B cell (primary cell): ENCODE measurements at regions of chr17 and their contacts with region 1.

Region 1: GRCh38 chr17:45247429-45248131 is 14.3 kb downstream of the SPATA32 start:
- DNase-seq: peak; percentile 97
- ATAC-seq: peak; percentile 88
- H3K4me3 ChIP-seq: peak overlapping the region; percentile 2 to 81 (median 78)
- H3K4me3 Mint-ChIP-seq: peak overlapping the region; percentile 92
- H3K27ac ChIP-seq: peak overlapping the region; percentile 82 to 92
- H3K27ac Mint-ChIP-seq: peak overlapping the region; percentile 96
- H3K4me1 ChIP-seq: peaks cover 20 to 22% of the 10 kb centered on the region in 2 donors
- H3K4me1 Mint-ChIP-seq: peaks cover 34% of the 10 kb centered on the region
- H3K27me3 ChIP-seq: no peaks in the 10 kb centered on the region
- H3K27me3 Mint-ChIP-seq: no peaks in the 10 kb centered on the region
- CTCF ChIP-seq: no peak

Region 2: DNA sequence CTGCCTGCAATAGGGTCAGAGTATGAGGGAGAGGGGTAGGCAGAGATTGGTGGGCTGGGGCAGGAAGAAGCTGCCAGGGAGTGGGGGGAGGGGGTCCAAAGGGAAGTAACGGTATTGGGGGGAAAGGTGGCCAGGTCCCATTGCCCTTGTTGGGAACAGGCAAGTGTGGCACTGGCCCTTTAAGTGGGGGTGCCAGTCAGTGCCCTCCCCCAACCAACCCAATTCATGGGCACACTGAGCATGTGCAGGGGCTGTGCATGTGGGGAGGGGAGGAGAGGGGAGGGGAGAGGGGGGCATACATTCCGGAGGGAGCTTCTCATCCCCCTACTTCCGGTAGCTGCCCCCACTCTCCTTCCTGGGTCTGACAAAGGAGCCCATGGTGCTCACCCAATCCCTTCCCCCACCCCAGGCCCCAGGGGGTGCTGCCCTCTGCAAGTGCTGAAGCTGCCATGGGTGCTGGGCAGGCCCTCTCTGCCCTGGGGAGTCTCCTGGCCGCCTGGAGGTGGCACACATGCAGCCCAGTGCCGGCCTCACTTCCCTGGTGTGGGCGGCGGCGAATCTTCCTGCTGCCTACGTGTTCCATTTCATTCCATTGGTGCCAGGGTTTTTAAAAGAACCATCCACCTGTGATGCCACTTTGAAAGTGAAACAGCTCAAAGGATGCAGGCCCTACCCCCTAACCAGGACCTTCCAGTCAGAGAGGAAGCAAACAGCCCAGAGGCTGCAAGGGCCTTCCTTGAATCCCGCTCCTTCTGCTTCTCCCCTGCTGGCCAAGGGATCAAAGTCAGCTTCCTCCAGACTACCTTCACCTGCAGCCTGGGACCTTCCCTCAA is 74.9 kb before region 1 on chr17:
- CTCF ChIA-PET with region 1: no interaction called
- POLR2A ChIA-PET with region 1: interaction called, 3 read pairs
- intact Hi-C with region 1: loop called (anchors 2 kb)
- DNase-seq: peak; percentile 59
- ATAC-seq: peak; percentile 85
- H3K4me3 ChIP-seq: peak overlapping the region in 4 of 5 experiments; percentile 31 to 51 (median 49)
- H3K4me3 Mint-ChIP-seq: peak overlapping the region; percentile 86
- H3K27ac ChIP-seq: peak overlapping the region; percentile 40 to 63
- H3K27ac Mint-ChIP-seq: peak overlapping the region; percentile 97
- H3K4me1 ChIP-seq: peaks cover 11 to 16% of the 10 kb centered on the region in 2 donors
- H3K4me1 Mint-ChIP-seq: peaks cover 12% of the 10 kb centered on the region
- H3K27me3 ChIP-seq: no peaks in the 10 kb centered on the region
- H3K27me3 Mint-ChIP-seq: no peaks in the 10 kb centered on the region
- CTCF ChIP-seq: no peak

Region 3: DNA sequence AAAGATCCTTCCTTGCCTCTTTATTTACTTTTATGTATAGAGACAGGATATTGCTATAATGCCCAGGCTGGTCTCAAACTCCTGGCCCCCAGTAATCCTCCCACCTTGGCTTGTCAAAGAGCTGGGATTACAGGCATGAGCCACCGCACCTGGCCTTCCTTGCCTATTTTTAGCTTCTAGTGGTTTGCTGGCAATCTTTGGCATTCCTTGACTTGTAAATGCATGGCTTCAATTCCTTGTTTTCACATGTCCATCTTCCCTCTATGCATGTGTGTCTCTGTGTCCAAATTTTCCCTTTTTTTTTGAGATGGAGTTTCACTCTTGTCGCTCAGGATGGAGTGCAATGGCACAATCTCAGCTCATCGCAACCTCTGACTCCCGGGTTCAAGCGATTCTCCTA is 63.4 kb before region 1 on chr17:
- CTCF ChIA-PET with region 1: no interaction called
- POLR2A ChIA-PET with region 1: no interaction called
- intact Hi-C with region 1: no loop called
- DNase-seq: no peak
- ATAC-seq: no peak
- H3K4me3 ChIP-seq: no peak overlapping the region
- H3K4me3 Mint-ChIP-seq: no peak overlapping the region
- H3K27ac ChIP-seq: no peak overlapping the region
- H3K27ac Mint-ChIP-seq: no peak overlapping the region
- H3K4me1 ChIP-seq: no peaks in the 10 kb centered on the region
- H3K4me1 Mint-ChIP-seq: no peaks in the 10 kb centered on the region
- H3K27me3 ChIP-seq: peaks cover 0 to 2% (median 0%) of the 10 kb centered on the region in 4 experiments
- H3K27me3 Mint-ChIP-seq: no peaks in the 10 kb centered on the region
- CTCF ChIP-seq: no peak

Region 4: GRCh38 chr17:45228763-45229539 is 18.6 kb before region 1 on chr17:
- CTCF ChIA-PET with region 1: interaction called, 737 read pairs
- POLR2A ChIA-PET with region 1: interaction called, 39 read pairs
- intact Hi-C with region 1: loop called (anchors 1 kb)
- DNase-seq: peak; percentile 94
- ATAC-seq: peak; percentile 52
- H3K4me3 ChIP-seq: peak overlapping the region; percentile 8 to 96 (median 90)
- H3K4me3 Mint-ChIP-seq: peak overlapping the region; percentile 100
- H3K27ac ChIP-seq: peak overlapping the region; percentile 99 to 100
- H3K27ac Mint-ChIP-seq: peak overlapping the region; percentile 99
- H3K4me1 ChIP-seq: peaks cover 70 to 90% of the 10 kb centered on the region in 2 donors
- H3K4me1 Mint-ChIP-seq: peaks cover 95% of the 10 kb centered on the region
- H3K27me3 ChIP-seq: no peaks in the 10 kb centered on the region
- H3K27me3 Mint-ChIP-seq: no peaks in the 10 kb centered on the region
- CTCF ChIP-seq: no peak

Region 5: DNA sequence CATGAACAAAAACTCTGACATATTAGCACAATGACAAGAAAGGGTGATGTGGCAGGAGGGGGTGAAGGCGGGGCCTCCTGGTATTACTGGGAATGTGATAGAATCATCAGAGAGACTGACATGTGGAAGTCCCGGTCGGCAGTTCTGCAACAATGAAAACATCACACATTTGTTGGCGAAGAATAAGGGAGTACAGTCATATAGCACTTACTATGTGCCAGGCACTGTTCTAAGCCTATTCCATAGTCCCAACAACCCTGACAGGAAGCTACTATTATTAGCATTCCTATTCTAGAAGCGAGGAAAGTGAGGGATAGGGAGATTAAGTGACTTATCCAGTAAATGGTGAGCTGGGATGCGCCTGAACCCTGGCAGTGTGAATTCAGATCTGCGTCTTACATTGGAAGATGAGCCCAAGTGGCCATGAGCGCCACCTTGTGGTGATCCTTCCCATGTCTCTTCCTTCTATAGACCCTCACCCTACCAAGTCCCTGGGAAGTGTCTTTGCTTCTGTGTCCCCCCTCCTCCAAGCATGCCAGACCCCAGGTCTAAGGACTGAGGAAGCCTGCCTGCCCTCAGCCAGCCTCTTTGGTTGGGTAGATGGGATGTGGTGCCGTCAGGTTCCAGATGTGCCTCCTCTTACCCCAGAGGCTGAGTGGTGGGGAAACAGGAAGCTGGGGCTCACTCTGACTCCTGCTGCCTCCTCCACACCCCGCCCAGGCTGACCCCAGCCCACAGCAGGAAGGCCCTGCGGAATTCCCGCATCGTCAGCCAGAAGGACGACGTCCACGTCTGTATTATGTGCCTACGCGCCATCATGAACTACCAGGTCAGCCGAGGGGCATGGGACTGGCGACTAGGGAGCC is 11.9 kb before region 1 on chr17:
- CTCF ChIA-PET with region 1: interaction called, 15 read pairs
- POLR2A ChIA-PET with region 1: interaction called, 39 read pairs
- intact Hi-C with region 1: loop called (anchors 2 kb)
- DNase-seq: peak; percentile 87
- ATAC-seq: peak; percentile 56
- H3K4me3 ChIP-seq: no peak overlapping the region
- H3K4me3 Mint-ChIP-seq: no peak overlapping the region
- H3K27ac ChIP-seq: peak overlapping the region; percentile 0 to 43
- H3K27ac Mint-ChIP-seq: peak overlapping the region; percentile 82
- H3K4me1 ChIP-seq: peaks cover 18 to 45% of the 10 kb centered on the region in 2 donors
- H3K4me1 Mint-ChIP-seq: peaks cover 47% of the 10 kb centered on the region
- H3K27me3 ChIP-seq: no peaks in the 10 kb centered on the region
- H3K27me3 Mint-ChIP-seq: no peaks in the 10 kb centered on the region
- CTCF ChIP-seq: peak; percentile 83

Region 6: DNA sequence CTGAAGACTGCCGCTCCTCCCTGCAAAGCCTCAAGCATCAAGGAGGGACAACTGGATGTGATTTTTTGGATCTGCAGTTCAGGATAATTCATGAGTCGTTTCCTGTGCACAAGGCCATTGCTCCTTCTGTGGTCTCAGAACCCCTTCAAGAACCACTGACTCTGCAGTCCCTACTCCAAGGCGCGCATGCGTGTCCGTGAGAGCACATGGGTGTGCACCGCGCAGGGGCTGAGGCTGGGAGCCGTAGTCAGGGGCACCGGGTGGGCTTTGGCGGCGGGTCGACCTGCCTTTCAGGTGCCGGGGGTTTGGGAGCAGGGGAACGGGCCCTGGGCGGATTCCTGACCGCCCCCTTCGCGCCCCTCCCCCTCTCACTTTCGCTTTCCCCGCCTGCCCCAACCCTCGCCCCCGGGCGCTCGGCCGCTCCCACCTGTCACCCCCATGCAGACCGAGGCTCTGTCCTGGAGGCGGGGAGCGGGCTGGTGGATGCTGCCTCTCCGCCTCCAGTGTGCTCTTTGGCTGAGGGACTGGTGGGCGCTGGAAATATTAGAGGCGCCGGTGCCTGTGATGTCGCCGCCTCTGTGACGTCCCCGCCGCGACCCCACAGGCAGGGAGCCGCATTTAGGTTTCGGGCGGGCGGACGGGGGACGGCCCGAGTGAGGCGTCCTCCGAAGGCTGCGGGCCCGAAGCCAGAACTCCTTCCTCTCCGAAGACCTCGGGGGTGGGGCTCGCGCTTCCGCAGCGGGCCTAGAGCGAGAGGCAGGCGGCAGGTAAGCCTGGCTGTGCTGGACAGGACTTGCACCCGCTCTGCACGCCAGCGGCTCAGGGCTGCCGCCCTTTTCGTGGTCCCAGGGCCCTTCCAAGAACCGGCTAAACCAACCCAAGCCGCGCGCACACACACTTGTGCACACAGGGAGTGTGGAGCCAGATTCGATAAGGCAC is 14.3 kb after region 1 on chr17 and contains the start of gene SPATA32:
- CTCF ChIA-PET with region 1: no interaction called
- POLR2A ChIA-PET with region 1: interaction called, 16 read pairs
- intact Hi-C with region 1: loop called (anchors 1 kb)
- DNase-seq: peak; percentile 68
- ATAC-seq: peak; percentile 71
- H3K4me3 ChIP-seq: peak within 1 kb of the TSS; percentile 19 to 81 (median 73)
- H3K4me3 Mint-ChIP-seq: peak within 1 kb of the TSS; percentile 87
- H3K27ac ChIP-seq: peak within 1 kb of the TSS; percentile 51 to 62
- H3K27ac Mint-ChIP-seq: peak within 1 kb of the TSS; percentile 78
- H3K4me1 ChIP-seq: peaks cover 5 to 18% of the 10 kb centered on the region in 2 donors
- H3K4me1 Mint-ChIP-seq: peaks cover 16% of the 10 kb centered on the region
- H3K27me3 ChIP-seq: no peaks in the 10 kb centered on the region
- H3K27me3 Mint-ChIP-seq: no peaks in the 10 kb centered on the region
- CTCF ChIP-seq: no peak
- total RNA-seq, gene SPATA32: 0.27 and 0.52 TPM in 2 replicates

Region 7: DNA sequence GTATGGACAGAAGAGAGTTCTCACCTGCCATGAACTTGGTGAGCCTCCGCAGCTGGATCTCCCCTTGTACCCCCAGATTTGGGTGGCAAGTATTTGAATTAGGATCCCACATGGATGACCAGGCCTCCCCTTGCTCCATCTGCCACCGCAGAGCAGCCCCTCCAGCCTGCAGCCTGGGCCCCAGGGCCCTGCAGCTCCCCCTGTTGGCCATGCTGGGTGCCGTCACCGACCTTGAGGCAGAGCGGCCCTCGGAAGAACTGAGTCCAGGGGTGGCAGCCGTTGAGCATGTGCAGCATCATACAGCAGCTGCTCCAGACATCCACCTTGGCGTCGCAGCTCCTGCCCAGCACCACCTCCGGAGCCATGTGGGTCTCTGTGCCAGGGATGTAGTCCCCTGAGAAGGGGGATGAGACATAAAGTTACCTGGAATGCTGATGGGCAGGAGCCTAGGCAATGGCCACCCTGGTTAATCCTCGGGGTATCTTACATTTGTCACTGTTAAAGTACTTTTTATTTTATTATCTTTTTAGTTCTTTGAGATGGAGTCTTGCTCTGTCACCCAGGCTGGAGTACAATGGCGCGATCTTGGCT is 23.3 kb after region 1 on chr17:
- CTCF ChIA-PET with region 1: interaction called, 17 read pairs
- POLR2A ChIA-PET with region 1: interaction called, 5 read pairs
- intact Hi-C with region 1: no loop called
- DNase-seq: peak; percentile 54
- ATAC-seq: peak; percentile 54
- H3K4me3 ChIP-seq: no peak overlapping the region
- H3K4me3 Mint-ChIP-seq: no peak overlapping the region
- H3K27ac ChIP-seq: no peak overlapping the region
- H3K27ac Mint-ChIP-seq: no peak overlapping the region
- H3K4me1 ChIP-seq: no peaks in the 10 kb centered on the region
- H3K4me1 Mint-ChIP-seq: no peaks in the 10 kb centered on the region
- H3K27me3 ChIP-seq: no peaks in the 10 kb centered on the region
- H3K27me3 Mint-ChIP-seq: no peaks in the 10 kb centered on the region
- CTCF ChIP-seq: peak; percentile 73

Region 8: DNA sequence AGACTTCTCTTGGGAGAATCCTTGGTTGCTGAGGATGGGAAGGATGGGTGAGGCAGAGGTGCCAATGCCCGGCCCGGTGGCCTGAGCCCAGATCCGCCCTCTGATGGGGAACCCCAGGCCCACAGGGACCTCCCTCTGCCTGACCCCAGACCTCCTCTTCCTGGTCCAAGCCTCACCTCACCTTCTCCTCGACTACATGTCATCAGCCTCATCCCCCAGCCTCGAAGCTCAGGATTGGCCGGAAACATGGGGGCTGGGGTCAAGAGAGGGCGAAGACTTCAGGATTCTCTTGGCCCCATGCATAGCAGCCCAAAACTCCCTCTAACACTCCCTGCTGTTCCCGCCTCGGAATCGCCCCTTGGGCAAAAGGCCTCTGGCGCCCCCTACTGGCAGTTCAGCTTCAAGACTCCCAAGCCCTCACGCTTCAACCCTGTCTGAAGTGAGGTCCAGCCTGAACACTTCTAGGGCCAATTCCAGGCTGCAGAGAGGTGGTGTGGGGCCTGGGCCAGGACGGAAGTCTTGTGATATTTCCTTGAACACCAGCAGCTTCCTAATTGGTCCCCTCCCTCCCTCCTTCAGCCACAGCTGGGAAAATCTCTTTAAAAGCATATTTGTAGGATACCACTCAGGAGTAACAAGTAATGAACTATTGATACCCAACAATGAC is 137.9 kb after region 1 on chr17:
- CTCF ChIA-PET with region 1: interaction called, 13 read pairs
- POLR2A ChIA-PET with region 1: interaction called, 4 read pairs
- intact Hi-C with region 1: no loop called
- DNase-seq: peak; percentile 89
- ATAC-seq: peak; percentile 96
- H3K4me3 ChIP-seq: no peak overlapping the region
- H3K4me3 Mint-ChIP-seq: no peak overlapping the region
- H3K27ac ChIP-seq: no peak overlapping the region
- H3K27ac Mint-ChIP-seq: peak overlapping the region; percentile 16
- H3K4me1 ChIP-seq: peaks cover 5 to 12% of the 10 kb centered on the region in 2 donors
- H3K4me1 Mint-ChIP-seq: peaks cover 17% of the 10 kb centered on the region
- H3K27me3 ChIP-seq: peaks cover 0 to 12% (median 2%) of the 10 kb centered on the region in 4 experiments
- H3K27me3 Mint-ChIP-seq: peaks cover 16% of the 10 kb centered on the region
- CTCF ChIP-seq: peak; percentile 98